BJ (cell line): ENCODE measurements at regions of chr16 and their contacts with region 1.

Region 1: GRCh38 chr16:19886073-19886941 is 1.7 kb upstream of the GPRC5B start:
- DNase-seq: no peak
- H3K4me3 ChIP-seq: no peak overlapping the region
- H3K27me3 ChIP-seq: peaks cover 15% of the 10 kb centered on the region
- CTCF ChIP-seq: peak; percentile 100

Region 2: DNA sequence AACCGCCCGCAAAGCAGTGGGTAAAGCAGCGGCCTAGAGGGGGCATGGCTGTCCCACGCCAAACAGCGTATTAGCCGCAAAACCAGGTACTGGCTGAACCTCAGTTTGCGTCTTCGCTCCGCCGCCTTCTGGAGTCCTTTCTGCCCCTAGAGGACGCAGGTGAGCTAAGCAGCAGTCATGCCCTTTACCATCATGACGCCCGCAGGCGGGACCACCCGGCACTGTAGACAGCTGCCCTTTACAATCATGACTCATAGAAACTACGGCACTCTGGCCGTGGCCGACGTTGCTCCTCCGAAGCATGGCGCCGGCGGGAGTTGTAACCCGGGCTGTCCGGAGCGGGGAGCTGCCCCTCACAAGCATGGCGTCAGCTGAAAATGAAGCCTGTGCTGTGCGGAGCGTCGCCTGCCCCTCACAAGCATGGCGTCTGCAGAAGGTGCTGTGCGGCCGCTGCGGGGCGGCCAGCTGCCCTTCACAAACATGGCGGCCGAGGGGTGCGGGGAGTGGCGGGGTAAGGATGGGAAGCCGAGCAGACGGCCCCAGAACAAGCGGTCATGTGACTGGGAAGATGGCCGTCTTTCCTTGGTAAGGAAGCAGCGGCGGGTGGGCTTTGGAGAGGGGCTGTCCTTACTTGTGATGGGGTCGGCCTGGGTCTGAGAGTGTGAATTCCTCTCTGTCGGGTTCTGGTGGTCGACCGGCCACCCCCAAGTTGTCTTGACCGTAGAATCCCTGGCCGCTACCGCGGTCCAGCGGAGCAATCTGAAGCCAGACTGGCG is 331.0 kb before region 1 on chr16 and contains the start of gene VPS35L:
- CTCF ChIA-PET with region 1: interaction called, 14 read pairs
- POLR2A ChIA-PET with region 1: no interaction called
- DNase-seq: peak; percentile 94
- H3K4me3 ChIP-seq: peak within 1 kb of the TSS; percentile 72
- H3K27me3 ChIP-seq: no peaks in the 10 kb centered on the region
- CTCF ChIP-seq: peak; percentile 83
- polyA plus RNA-seq, gene VPS35L: 40.1 and 83.2 TPM in 2 replicates

Region 3: DNA sequence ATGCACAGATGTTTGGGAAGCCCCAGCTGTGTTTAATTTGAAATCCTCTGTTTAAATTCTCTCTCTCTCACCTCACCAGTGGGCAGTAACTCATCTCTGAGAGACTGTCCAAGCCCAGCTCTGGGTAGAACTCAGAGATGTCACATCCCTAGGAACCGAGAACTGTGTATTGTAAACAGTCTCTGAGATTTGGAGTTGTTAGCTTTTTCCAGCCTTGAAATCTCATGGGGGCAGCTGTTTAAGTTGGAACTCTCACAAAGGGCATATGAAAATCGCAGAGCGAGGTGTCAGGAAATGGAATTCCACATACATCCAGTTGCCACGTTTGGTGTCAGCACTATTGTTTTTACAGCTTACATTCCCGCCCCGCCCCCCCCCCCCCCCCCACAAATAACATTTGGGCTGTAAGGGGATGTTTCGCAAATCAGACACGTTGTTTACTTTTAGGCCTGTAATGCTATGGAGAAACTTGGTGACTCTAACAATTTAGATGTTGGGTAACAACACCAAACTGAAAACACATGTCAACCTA is 296.5 kb before region 1 on chr16:
- CTCF ChIA-PET with region 1: interaction called, 178 read pairs
- POLR2A ChIA-PET with region 1: no interaction called
- DNase-seq: peak; percentile 58
- H3K4me3 ChIP-seq: no peak overlapping the region
- H3K27me3 ChIP-seq: no peaks in the 10 kb centered on the region
- CTCF ChIP-seq: no peak

Region 4: DNA sequence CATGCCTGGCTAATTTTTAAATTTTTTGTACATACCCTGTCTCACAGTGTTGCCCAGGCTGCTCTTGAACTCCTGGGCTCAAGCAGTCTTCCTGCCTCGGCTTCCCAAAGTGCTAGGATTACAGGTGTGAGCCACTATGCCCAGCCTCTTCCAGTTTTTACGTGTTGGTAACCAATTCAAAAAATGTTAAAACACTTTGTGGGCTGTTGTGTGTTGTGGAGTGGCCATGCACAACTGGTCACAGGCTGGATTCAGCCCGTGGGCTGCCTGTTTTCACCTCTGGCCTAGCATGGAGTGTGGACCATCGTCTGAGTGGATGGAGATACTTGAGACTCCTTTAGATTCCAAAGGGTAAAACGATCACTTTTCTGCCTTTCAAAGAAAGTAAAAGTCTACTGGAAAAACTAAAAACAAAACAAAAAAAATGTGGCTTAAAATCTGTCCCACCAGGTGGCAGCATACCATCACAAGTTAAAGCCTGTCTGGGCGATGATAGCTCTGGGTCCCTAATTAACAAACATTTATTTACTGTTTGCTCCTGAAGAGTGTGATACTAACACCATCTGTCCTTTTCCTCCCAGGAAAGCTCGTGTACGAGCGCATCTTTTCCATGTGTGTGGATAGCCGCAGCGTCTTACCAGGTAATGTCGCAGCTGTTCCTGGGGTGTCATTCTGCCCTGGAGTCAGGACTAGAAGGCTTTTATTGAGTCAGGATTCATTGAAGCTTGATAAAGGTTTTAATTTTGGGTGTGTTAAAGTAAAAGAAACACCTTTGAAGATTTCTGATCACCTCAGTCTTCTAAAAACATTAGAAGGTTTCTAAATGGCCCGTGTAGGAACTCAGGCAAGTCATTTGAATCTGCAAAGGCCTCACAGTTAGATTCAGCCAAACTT is 285.0 kb before region 1 on chr16:
- CTCF ChIA-PET with region 1: interaction called, 178 read pairs
- POLR2A ChIA-PET with region 1: no interaction called
- DNase-seq: no peak
- H3K4me3 ChIP-seq: no peak overlapping the region
- H3K27me3 ChIP-seq: no peaks in the 10 kb centered on the region
- CTCF ChIP-seq: peak; percentile 57

Region 5: DNA sequence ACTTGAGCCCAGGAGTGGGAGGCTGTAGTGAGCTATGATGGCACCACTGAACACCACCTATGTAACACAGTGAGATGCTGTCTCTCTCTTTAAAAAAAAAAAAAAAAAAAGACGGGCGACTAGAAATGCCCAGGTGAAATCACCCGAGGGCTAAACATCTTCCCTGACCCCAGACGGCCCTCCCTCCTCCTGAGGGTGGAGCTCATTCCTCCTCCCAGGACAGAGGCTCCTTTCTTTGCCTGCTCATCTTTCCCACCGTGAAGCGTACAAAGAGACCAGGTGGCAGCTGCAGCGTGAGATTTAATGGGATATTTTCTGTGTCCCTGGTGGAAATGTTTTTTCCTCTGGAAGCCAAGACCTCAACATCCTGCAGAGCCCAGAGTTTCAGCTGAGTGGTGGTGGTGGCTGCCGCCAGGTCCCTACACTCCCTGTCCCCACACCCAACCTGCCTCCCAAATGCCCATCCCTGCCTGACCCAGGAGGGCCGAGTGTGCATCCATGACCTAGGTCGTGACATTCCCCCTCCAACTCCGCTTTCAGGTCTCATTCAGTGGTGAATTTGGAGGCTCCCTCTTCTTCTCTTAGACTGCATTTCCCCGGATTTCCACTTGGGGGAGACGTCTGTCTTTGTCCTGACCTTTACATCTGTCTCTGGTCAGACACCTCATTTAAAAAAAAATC is 12.8 kb after region 1 on chr16:
- CTCF ChIA-PET with region 1: interaction called, 12 read pairs
- POLR2A ChIA-PET with region 1: no interaction called
- DNase-seq: no peak
- H3K4me3 ChIP-seq: no peak overlapping the region
- H3K27me3 ChIP-seq: no peaks in the 10 kb centered on the region
- CTCF ChIP-seq: peak; percentile 85

Region 6: GRCh38 chr16:19907161-19907992 is 21.1 kb after region 1 on chr16:
- CTCF ChIA-PET with region 1: interaction called, 16 read pairs
- POLR2A ChIA-PET with region 1: no interaction called
- DNase-seq: no peak
- H3K4me3 ChIP-seq: no peak overlapping the region
- H3K27me3 ChIP-seq: peaks cover 2% of the 10 kb centered on the region; the same call in 1 of the 2 replicates
- CTCF ChIP-seq: peak; percentile 97